B cell (primary cell): ENCODE measurements at regions of chr1 and their contacts with region 1.

Region 1: DNA sequence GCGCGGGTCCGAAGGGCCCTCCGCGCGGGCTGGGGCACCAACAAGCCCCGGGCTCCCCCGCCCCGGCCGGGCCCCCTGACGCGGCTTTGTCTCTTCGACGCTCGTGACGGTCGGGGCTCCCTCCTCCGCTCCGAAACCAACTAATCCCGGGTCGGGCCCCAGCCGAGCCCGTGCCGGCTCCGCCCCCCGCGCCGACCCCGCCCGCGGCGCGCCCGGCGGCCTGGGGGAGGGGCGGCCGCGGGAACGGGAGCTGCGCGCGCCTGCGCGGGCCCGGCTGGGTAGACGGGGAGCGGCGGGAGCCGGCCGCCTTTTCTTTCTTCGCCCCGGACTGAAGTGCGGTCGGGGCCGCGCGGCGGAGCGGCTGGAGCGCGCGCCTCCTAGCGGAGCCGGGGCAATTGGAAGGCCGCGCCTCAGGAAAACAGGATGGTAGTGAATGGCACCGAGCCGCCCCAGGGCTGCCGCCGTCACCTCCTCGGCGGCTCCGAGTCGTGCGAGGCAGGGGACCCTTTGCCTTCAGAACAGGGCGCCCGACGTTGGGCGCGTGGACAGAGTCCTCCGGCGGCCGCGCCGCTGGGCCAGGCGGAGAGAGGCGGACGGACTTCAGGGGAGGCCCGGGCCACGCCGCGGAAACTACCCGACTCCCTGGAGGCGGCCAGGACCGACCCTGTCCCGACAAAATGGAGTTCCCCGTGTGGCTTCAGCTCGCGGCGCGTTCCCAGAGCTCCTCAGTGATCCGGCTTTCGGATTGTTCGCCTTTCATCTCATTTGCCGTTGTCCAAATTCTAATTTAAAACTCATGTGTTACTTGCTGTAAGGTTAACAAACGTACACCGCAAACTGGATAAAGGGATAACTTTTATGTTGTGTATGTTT is at the start of gene TP53BP2:
- DNase-seq: peak; percentile 93
- ATAC-seq: peak; percentile 85
- H3K4me3 ChIP-seq: peak within 1 kb of the TSS; percentile 83 to 91 (median 84)
- H3K4me3 Mint-ChIP-seq: peak within 1 kb of the TSS; percentile 92
- H3K27ac ChIP-seq: peak within 1 kb of the TSS; percentile 92 to 93
- H3K27ac Mint-ChIP-seq: peak within 1 kb of the TSS; percentile 97
- H3K4me1 ChIP-seq: peaks cover 19 to 22% of the 10 kb centered on the region in 2 donors
- H3K4me1 Mint-ChIP-seq: peaks cover 33% of the 10 kb centered on the region
- H3K27me3 ChIP-seq: no peaks in the 10 kb centered on the region
- H3K27me3 Mint-ChIP-seq: no peaks in the 10 kb centered on the region
- CTCF ChIP-seq: peak; percentile 36
- total RNA-seq, gene TP53BP2: 40.0 and 49.2 TPM in 2 replicates

Region 2: DNA sequence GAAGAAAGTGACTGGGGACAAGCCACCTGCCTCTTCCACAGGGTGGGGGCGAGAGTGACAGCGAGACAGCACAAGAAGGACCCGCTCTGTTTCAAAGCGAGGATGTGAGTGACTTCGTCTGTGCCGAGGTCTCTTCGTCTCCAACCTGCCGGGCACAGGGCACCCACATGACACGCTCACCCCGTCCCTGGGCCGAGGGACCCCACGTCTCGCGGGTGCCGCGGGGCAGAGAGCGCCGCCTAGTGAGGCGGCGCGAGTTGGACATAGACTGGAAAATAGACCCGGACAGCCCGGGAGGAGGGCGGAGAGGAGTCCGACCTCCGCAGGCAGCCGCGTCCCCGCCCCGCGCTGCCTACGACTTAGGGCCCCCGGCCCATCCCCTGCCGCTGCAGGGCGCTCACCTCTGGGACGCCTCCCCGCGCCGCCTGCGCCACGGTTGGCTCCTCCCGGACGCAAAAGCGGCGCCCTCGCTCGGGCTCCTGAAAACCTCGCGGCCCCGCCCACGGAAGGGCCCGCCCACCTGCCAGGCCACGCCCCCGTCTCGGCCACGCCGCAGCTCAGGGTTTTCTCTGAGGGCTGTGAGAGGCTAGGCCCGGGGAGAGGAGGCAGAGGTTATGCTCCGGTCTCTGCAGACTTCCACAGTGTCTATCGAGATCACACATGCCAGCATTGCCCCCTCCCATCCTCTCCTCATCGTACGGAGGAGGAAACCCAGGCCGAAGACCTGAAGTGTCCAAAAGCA is 703.1 kb before region 1 on chr1 and contains the start of gene TLR5:
- CTCF ChIA-PET with region 1: no interaction called
- POLR2A ChIA-PET with region 1: no interaction called
- intact Hi-C with region 1: loop called (anchors 5 kb)
- DNase-seq: peak; percentile 87
- ATAC-seq: peak; percentile 91
- H3K4me3 ChIP-seq: peak within 1 kb of the TSS; percentile 43 to 74 (median 60)
- H3K4me3 Mint-ChIP-seq: peak within 1 kb of the TSS; percentile 77
- H3K27ac ChIP-seq: no peak within 1 kb of the TSS
- H3K27ac Mint-ChIP-seq: no peak within 1 kb of the TSS
- H3K4me1 ChIP-seq: peaks cover 13 to 18% of the 10 kb centered on the region in 2 donors
- H3K4me1 Mint-ChIP-seq: peaks cover 15% of the 10 kb centered on the region
- H3K27me3 ChIP-seq: peaks cover 0 to 18% (median 7%) of the 10 kb centered on the region in 4 experiments
- H3K27me3 Mint-ChIP-seq: peaks cover 22% of the 10 kb centered on the region
- CTCF ChIP-seq: peak; percentile 59
- total RNA-seq, gene TLR5: 0.19 TPM in 1 of 2 replicates, not detected in the other

Region 3: GRCh38 chr1:223811634-223812415 is 34.2 kb before region 1 on chr1:
- CTCF ChIA-PET with region 1: interaction called, 14 read pairs
- POLR2A ChIA-PET with region 1: no interaction called
- intact Hi-C with region 1: loop called (anchors 5 kb)
- DNase-seq: peak; percentile 57
- ATAC-seq: peak; percentile 43
- H3K4me3 ChIP-seq: no peak overlapping the region
- H3K4me3 Mint-ChIP-seq: no peak overlapping the region
- H3K27ac ChIP-seq: no peak overlapping the region
- H3K27ac Mint-ChIP-seq: no peak overlapping the region
- H3K4me1 ChIP-seq: no peaks in the 10 kb centered on the region
- H3K4me1 Mint-ChIP-seq: peaks cover 9% of the 10 kb centered on the region
- H3K27me3 ChIP-seq: no peaks in the 10 kb centered on the region
- H3K27me3 Mint-ChIP-seq: no peaks in the 10 kb centered on the region
- CTCF ChIP-seq: peak; percentile 77

Region 4: DNA sequence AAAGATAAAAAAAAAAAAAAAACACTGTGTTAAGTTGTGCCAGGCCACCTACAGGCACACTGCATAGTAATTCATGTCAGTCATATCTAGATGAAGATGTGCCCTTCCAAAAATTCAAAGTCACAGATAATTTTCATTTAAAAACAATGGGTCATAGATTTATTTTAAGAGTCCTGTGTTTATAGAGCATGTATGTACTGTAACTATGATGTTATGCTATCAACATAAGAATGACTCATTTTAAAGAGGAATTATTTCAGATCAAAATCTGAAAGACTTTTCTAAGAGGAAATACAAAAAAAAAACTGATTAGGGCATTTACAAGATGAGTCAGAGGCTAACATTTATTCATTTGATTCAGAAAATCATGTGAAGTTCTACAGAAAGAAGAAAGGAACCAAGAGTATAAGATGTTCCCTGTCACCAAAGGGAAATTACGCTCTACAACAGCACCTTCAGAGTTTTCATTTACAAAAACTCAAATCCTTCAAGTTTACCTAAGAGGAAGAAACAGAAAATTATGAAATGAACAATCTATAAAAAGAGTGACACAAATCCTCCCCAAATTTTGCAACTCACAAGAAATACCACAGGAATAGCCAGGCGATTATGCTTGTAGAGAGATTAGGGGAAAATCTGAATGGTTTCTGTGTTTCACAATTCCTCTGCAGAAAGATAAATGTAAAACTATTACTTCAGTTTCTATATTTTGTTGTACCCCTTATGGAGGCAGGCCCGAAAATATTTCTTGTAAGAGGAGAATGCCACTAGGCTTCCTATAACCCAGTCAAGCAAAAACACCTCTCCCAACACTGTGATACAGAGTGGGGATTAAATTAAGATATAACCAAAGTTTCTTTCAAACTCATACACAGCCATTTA is 14.1 kb before region 1 on chr1:
- CTCF ChIA-PET with region 1: interaction called, 4 read pairs
- POLR2A ChIA-PET with region 1: interaction called, 3 read pairs
- intact Hi-C with region 1: loop called (anchors 1 kb)
- DNase-seq: no peak
- ATAC-seq: peak; percentile 57
- H3K4me3 ChIP-seq: no peak overlapping the region
- H3K4me3 Mint-ChIP-seq: peak overlapping the region; percentile 18
- H3K27ac ChIP-seq: peak overlapping the region in 1 of 2 donors; percentile 37
- H3K27ac Mint-ChIP-seq: peak overlapping the region; percentile 60
- H3K4me1 ChIP-seq: peaks cover 27 to 34% of the 10 kb centered on the region in 2 donors
- H3K4me1 Mint-ChIP-seq: peaks cover 28% of the 10 kb centered on the region
- H3K27me3 ChIP-seq: no peaks in the 10 kb centered on the region
- H3K27me3 Mint-ChIP-seq: no peaks in the 10 kb centered on the region
- CTCF ChIP-seq: no peak

Region 5: DNA sequence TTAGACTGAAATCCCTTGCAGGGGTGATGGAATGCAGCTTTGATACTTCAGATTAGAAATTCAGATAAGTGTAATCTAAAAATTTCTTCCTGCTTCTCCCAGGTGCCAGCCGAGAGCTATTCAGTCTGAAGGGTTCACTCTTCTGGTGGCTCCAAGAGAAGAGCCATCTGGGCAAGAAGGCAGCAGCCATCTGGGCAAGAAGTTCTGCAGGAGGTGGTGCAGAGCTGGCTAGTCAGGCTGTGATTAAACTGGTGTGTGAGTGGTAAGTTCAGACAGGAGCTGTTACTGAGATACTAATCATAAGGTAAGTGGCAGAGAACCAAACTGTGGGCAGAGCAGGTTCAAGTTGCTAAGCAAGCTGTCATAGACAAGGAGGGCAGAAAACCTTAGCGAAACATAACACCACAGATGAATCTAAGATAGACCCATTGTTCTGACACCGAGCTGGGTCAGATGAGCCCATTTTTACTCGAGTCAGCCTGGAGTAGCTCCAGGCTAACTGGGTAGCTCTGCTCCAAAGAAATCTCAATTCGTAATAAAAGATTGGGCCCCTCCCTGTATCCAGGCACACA is 14.1 kb after region 1 on chr1:
- CTCF ChIA-PET with region 1: no interaction called
- POLR2A ChIA-PET with region 1: no interaction called
- intact Hi-C with region 1: no loop called
- DNase-seq: no peak
- ATAC-seq: no peak
- H3K4me3 ChIP-seq: no peak overlapping the region
- H3K4me3 Mint-ChIP-seq: no peak overlapping the region
- H3K27ac ChIP-seq: no peak overlapping the region
- H3K27ac Mint-ChIP-seq: no peak overlapping the region
- H3K4me1 ChIP-seq: no peaks in the 10 kb centered on the region
- H3K4me1 Mint-ChIP-seq: no peaks in the 10 kb centered on the region
- H3K27me3 ChIP-seq: no peaks in the 10 kb centered on the region
- H3K27me3 Mint-ChIP-seq: peaks cover 14% of the 10 kb centered on the region
- CTCF ChIP-seq: no peak

Region 6: GRCh38 chr1:224182866-224183590 is 337.0 kb after region 1 on chr1 and contains the start of gene DEGS1:
- CTCF ChIA-PET with region 1: no interaction called
- POLR2A ChIA-PET with region 1: no interaction called
- intact Hi-C with region 1: loop called (anchors 2 kb)
- DNase-seq: peak; percentile 93
- ATAC-seq: peak; percentile 82
- H3K4me3 ChIP-seq: peak within 1 kb of the TSS; percentile 74 to 90 (median 82)
- H3K4me3 Mint-ChIP-seq: peak within 1 kb of the TSS; percentile 93
- H3K27ac ChIP-seq: peak within 1 kb of the TSS; percentile 90 to 99
- H3K27ac Mint-ChIP-seq: peak within 1 kb of the TSS; percentile 94
- H3K4me1 ChIP-seq: peaks cover 41 to 51% of the 10 kb centered on the region in 2 donors
- H3K4me1 Mint-ChIP-seq: peaks cover 36% of the 10 kb centered on the region
- H3K27me3 ChIP-seq: no peaks in the 10 kb centered on the region
- H3K27me3 Mint-ChIP-seq: no peaks in the 10 kb centered on the region
- CTCF ChIP-seq: no peak
- total RNA-seq, gene DEGS1: 51.3 and 52.1 TPM in 2 replicates

Region 7: DNA sequence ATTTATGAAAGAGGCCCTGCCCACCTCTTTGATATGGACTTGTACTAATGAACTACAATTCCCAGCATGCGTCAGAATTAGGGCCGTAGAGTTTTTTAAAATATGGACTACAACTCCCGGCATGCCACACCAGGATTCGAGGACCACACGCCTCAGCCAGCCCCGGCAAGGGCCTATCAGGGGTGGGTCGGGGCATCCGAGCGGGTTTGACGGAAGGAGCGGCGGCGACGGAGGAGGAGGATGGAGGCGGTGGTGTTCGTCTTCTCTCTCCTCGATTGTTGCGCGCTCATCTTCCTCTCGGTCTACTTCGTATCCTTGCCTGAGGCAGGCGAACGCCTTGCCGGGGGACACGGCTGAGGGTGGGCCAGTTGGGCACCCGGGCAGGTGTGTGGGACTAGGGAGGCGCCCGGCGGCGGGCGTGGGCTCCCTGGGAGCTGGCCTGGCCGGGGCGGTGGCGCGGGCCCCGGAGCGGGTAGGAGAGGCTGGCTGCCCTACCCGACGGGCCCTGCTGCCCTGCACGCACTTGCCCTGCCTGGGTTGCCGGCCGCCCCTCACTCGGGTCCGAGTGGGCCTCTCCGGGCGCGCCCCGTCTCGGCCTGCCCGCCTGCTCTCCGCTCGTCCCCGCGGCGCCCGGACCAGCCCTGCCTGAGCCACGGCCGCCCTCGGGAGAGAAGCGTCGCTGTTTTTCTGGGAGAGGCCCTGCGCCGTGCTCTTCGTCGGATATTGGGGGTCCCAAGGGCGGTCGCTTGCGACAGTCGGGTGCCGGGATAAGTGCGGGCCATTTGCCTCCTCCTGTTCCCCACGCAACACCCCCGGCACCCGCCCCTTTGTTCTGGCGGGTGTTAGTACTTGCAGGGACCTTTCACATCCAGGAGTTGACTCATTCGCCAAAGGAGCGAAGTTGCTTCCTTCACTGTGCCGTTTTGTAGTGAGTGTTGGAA is 510.9 kb after region 1 on chr1 and contains the start of gene CNIH4:
- CTCF ChIA-PET with region 1: no interaction called
- POLR2A ChIA-PET with region 1: interaction called, 3 read pairs
- intact Hi-C with region 1: loop called (anchors 1 kb)
- DNase-seq: peak; percentile 94
- ATAC-seq: peak; percentile 98
- H3K4me3 ChIP-seq: peak within 1 kb of the TSS; percentile 69 to 88 (median 82)
- H3K4me3 Mint-ChIP-seq: peak within 1 kb of the TSS; percentile 86
- H3K27ac ChIP-seq: peak within 1 kb of the TSS; percentile 34 to 61
- H3K27ac Mint-ChIP-seq: peak within 1 kb of the TSS; percentile 92
- H3K4me1 ChIP-seq: peaks cover 9 to 14% of the 10 kb centered on the region in 2 donors
- H3K4me1 Mint-ChIP-seq: peaks cover 22% of the 10 kb centered on the region
- H3K27me3 ChIP-seq: no peaks in the 10 kb centered on the region
- H3K27me3 Mint-ChIP-seq: no peaks in the 10 kb centered on the region
- CTCF ChIP-seq: no peak
- total RNA-seq, gene CNIH4: 27.2 and 31.5 TPM in 2 replicates

Region 8: GRCh38 chr1:224387302-224387912 is 541.4 kb after region 1 on chr1:
- CTCF ChIA-PET with region 1: no interaction called
- POLR2A ChIA-PET with region 1: no interaction called
- intact Hi-C with region 1: no loop called
- DNase-seq: no peak
- ATAC-seq: no peak
- H3K4me3 ChIP-seq: no peak overlapping the region
- H3K4me3 Mint-ChIP-seq: no peak overlapping the region
- H3K27ac ChIP-seq: no peak overlapping the region
- H3K27ac Mint-ChIP-seq: no peak overlapping the region
- H3K4me1 ChIP-seq: no peaks in the 10 kb centered on the region
- H3K4me1 Mint-ChIP-seq: no peaks in the 10 kb centered on the region
- H3K27me3 ChIP-seq: no peaks in the 10 kb centered on the region
- H3K27me3 Mint-ChIP-seq: no peaks in the 10 kb centered on the region
- CTCF ChIP-seq: no peak